Upper lobe of right lung (tissue), 1 donor: ENCODE measurements at regions of chr17 and their contacts with region 1.

Region 1: DNA sequence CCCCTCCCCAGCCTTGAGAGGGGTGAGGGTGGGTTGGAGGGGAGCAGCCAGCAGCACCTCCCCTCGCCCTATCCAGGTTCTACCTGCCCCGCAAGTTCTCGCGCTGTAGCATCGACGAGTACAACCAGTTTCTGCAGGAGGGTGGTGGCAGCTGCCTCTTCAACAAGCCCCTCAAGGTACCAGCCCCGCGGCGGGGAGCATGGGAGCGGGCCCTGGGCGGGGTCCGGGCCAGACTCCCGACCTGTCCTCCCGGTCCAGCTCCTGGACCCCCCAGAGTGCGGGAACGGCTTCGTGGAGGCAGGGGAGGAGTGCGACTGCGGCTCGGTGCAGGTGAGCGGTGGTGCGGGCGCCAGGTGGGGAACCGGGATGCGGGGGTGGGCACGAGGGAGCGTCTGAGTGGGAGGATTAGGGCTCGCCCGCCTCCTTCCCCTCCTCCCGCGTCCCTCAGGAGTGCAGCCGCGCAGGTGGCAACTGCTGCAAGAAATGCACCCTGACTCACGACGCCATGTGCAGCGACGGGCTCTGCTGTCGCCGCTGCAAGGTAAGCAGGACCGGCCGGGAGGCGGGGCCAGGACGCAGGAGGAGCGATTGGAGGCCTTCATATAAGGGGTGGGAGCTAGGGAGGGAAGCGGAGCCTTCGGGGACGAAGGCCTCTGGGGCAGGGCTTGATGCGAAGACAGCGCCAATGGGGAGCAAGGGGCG is 16.5 kb downstream of the ADAM11 start:
- DNase-seq: no peak
- ATAC-seq: peak; percentile 96
- H3K4me3 ChIP-seq: peak overlapping the region; percentile 58
- H3K27ac ChIP-seq: no peak overlapping the region
- H3K4me1 ChIP-seq: peaks cover 11% of the 10 kb centered on the region
- H3K27me3 ChIP-seq: peaks cover 19% of the 10 kb centered on the region
- CTCF ChIP-seq: peak; percentile 3

Region 2: GRCh38 chr17:44708401-44709181 is 66.7 kb before region 1 on chr17 and contains the start of gene DBF4B:
- intact Hi-C with region 1: no loop called
- DNase-seq: peak; percentile 81
- ATAC-seq: peak; percentile 98
- H3K4me3 ChIP-seq: peak within 1 kb of the TSS; percentile 87
- H3K27ac ChIP-seq: peak within 1 kb of the TSS; percentile 78
- H3K4me1 ChIP-seq: peaks cover 9% of the 10 kb centered on the region
- H3K27me3 ChIP-seq: peaks cover 4% of the 10 kb centered on the region
- CTCF ChIP-seq: no peak
- total RNA-seq, gene DBF4B: 4.5 TPM

Region 3: GRCh38 chr17:44864866-44865660 is 89.8 kb after region 1 on chr17:
- intact Hi-C with region 1: loop called (anchors 5 kb)
- DNase-seq: no peak
- ATAC-seq: peak; percentile 86
- H3K4me3 ChIP-seq: no peak overlapping the region
- H3K27ac ChIP-seq: no peak overlapping the region
- H3K4me1 ChIP-seq: no peaks in the 10 kb centered on the region
- H3K27me3 ChIP-seq: no peaks in the 10 kb centered on the region
- CTCF ChIP-seq: peak; percentile 89